ENCODE measurements at regions of chr13 and their contacts with region 1.

Region 1: DNA sequence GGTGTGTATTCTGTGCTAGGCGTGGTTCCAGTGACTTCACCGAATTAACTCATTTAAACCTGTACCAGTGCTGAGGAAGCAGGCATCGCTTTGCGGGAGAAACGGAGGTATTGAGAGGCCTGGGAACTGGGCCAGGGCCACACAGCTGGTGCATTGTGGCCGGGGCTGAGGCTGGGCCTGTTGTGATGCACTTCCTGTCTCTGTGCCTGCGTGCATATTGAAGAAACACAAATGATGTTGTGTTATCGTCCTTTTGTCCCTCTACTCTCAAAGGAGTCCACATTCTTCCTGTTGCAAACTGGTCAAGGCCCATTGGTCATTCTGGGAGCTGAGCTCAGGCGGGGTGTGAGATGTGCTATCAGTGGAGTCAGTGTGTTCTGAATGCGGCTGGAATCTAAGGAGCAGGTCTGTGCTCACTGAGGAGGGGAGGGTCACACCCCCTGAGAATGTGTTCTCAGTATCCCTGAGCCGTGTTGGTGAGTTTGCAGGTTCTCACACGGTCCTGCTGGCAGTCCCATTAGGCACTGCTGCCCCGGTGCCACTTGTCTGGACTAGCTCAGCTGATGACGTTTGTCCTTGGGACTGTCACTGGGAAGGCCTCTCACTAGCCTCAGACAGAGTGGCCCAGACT is 62.1 kb downstream of the ARHGEF7 start:
- DNase-seq: peak; percentile 68
- ATAC-seq: peak; percentile 84
- H3K4me3 Mint-ChIP-seq: peak overlapping the region; percentile 78
- H3K27ac Mint-ChIP-seq: peak overlapping the region; percentile 97
- H3K4me1 Mint-ChIP-seq: peaks cover 68% of the 10 kb centered on the region
- H3K27me3 Mint-ChIP-seq: no peaks in the 10 kb centered on the region

Region 2: DNA sequence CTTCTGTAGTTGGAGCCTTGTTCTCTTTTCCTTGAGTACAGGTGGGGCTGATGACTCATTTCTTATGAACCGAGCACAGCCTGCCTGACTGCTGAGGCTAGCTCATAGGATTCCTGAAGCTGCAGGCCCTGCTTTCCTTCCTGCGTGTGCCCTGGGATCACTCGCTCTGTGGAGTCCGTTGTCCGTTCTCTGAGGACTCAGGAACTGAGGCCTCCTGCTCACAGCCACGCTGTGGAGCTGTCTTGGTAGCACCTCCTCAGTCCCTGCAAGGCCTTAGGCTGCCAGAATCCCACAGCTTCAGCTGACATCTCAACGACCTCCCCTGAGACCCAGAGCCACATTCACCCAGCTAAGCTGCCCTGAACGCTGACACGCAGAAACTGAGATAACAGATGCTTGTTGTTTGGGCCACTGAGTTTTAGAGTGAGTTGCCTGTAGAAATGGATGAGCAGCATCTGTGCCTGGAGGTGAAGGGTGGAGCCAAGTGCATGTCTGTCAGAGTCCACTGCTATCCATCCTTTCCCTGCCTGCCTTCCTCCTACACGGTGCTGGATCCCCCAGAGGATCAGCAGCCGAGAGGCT is 10.9 kb after region 1 on chr13:
- POLR2A ChIA-PET with region 1: interaction called, 13 read pairs
- DNase-seq: no peak
- ATAC-seq: no peak
- H3K4me3 Mint-ChIP-seq: peak overlapping the region; percentile 71
- H3K27ac Mint-ChIP-seq: peak overlapping the region; percentile 81
- H3K4me1 Mint-ChIP-seq: peaks cover 72% of the 10 kb centered on the region
- H3K27me3 Mint-ChIP-seq: no peaks in the 10 kb centered on the region

Measured in activated naive CD8-positive, alpha-beta T cell treated with anti-CD3 and anti-CD28 coated beads, Interleukin-2, amount 10 ng/mL, durations not matched to agents 7 days and 5 days (primary cell).